Panc1 (cell line): ENCODE measurements at regions of chr2 and their contacts with region 1.

Region 1: GRCh38 chr2:181104512-181105115 is 124.2 kb downstream of the UBE2E3 start:
- DNase-seq: peak; percentile 52
- ATAC-seq: peak; percentile 72; the same call in 1 of the 2 replicates
- H3K4me3 ChIP-seq: no peak overlapping the region
- H3K27ac ChIP-seq: no peak overlapping the region
- H3K4me1 ChIP-seq: peaks cover 11% of the 10 kb centered on the region
- H3K27me3 ChIP-seq: no peaks in the 10 kb centered on the region
- CTCF ChIP-seq: peak; percentile 82; the same call in 1 of the 2 replicates

Region 2: GRCh38 chr2:181243319-181243718 is 138.7 kb after region 1 on chr2:
- CTCF ChIA-PET with region 1: interaction called, 12 read pairs
- POLR2A ChIA-PET with region 1: no interaction called
- in situ Hi-C with region 1: no loop called
- intact Hi-C with region 1: no loop called
- DNase-seq: no peak
- ATAC-seq: no peak
- H3K4me3 ChIP-seq: no peak overlapping the region
- H3K27ac ChIP-seq: no peak overlapping the region
- H3K4me1 ChIP-seq: no peaks in the 10 kb centered on the region
- H3K27me3 ChIP-seq: no peaks in the 10 kb centered on the region
- CTCF ChIP-seq: no peak

Region 3: GRCh38 chr2:181466661-181467576 is 362.3 kb after region 1 on chr2:
- CTCF ChIA-PET with region 1: interaction called, 3 read pairs
- POLR2A ChIA-PET with region 1: no interaction called
- in situ Hi-C with region 1: no loop called
- intact Hi-C with region 1: loop called (anchors 2 kb)
- DNase-seq: peak; percentile 10
- ATAC-seq: no peak
- H3K4me3 ChIP-seq: no peak overlapping the region
- H3K27ac ChIP-seq: no peak overlapping the region
- H3K4me1 ChIP-seq: no peaks in the 10 kb centered on the region
- H3K27me3 ChIP-seq: no peaks in the 10 kb centered on the region
- CTCF ChIP-seq: peak; percentile 92